Activated B cell treated with CpG ODN at 0.5 μM for 24 hours (primary cell): ENCODE measurements at regions of chr3 and their contacts with region 1.

Region 1: DNA sequence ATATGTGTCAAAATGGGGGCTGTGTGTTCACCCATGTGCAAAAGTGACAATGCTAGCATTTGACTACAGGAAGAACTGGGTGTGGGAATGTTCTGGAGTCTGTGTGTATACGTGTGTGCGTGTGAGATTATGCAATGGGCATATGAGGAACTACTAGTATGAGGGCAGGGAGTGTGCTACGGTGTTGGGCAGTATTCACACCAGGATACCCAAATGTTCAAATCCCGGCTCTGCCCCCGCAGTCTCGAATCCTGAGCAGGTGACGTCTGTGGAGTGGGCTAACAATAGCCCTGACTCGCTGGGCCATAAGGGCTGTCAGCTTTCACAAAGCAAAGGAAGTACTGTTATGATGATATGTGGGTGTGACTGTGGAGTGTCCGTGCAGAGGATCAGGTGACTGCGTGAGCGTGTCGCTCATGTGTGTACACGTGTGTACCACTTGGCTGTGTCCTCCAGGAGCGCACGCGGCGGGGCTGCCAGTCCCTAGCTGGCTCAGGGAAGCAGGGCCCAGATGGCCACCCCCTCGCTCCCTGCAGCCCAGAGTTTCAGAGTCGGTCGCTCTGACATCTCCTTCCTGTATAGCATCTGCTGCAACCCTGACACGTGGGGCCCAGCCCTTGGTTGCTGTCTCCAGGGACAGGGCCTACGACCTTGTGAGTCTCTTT is 27.2 kb downstream of the IQSEC1 start:
- DNase-seq: peak; percentile 61
- ATAC-seq: peak; percentile 90
- H3K4me3 Mint-ChIP-seq: peak overlapping the region; percentile 62
- H3K27ac Mint-ChIP-seq: peak overlapping the region; percentile 90
- H3K4me1 Mint-ChIP-seq: peaks cover 74% of the 10 kb centered on the region
- H3K27me3 Mint-ChIP-seq: no peaks in the 10 kb centered on the region
- CTCF ChIP-seq: no peak

Region 2: DNA sequence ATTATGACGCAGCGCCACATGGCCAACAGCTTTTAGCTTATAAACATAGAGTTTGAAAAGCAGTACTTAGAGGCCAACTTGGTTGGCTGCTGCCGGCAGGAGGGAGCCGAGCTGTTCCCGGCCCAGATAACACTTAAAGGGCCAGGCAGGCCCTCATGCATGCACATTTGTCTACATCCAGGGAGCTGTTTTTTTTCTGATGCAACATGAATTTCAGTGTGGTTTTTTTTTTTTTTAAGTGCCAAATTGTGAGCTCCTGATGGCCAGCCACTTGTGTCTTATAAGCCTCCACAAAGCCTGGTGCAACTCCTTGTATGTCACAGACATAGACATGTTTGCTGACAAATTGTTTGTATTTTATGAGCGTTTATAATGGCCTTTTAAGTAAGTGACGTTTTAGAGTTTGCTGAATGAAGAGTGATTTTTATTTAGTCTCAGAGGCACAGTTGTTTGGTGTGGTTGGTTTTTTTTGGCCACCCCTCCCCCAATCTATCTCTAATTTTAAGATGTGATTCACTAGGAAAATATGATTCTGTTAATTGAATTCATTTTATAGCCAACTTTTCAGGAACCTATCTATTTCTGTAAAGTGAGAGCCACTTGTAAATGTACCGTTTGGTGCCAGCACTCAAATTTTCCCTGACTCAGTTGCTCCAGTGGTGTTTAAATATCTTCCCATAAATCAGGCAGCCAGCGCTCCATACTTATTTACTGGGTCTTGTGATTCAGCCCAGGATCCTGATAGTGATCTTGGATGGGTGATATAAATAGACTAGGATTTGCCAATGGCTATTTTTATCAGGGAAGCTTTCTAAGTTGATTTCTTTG is 1536.6 kb before region 1 on chr3:
- CTCF ChIA-PET with region 1: no interaction called
- POLR2A ChIA-PET with region 1: no interaction called
- intact Hi-C with region 1: no loop called
- DNase-seq: no peak
- ATAC-seq: no peak
- H3K4me3 Mint-ChIP-seq: no peak overlapping the region
- H3K27ac Mint-ChIP-seq: no peak overlapping the region
- H3K4me1 Mint-ChIP-seq: no peaks in the 10 kb centered on the region
- H3K27me3 Mint-ChIP-seq: no peaks in the 10 kb centered on the region
- CTCF ChIP-seq: no peak

Region 3: DNA sequence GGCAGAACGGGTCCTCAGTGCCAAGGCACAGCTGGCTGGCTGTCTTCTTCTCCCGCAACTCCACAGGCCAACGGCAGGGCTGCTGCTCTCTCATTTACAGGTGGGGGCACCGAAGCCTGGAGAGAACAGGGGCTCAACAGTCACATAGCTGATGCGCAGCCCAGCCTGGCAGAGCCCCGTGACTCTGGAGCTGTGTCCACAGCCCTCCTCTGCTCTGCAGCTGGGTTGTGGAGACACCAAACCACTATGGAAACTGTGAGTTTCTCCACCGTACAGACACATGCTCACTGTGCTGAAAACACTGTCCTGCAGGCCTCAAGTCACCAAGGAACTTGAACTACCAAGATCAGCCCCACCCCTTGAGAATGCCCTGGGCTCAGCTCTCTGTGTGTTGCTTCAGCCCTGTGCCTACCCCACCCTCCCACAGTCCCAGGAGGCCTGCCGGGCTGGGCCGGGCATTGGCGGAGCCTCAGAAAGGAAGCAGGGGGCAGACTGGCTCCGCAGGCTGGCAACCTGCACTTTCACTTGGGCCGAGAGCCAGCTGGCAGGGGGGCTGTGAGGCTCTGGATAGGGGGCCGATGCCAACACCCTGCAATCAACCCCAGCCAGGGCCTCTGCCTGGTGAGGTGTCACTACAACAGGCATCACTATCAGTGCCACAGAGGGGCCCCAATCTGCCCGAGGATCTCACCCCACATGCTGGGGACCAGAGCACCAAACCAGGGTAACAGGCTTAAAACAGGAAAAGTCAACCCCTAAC is 91.0 kb before region 1 on chr3:
- CTCF ChIA-PET with region 1: interaction called, 9 read pairs
- POLR2A ChIA-PET with region 1: interaction called, 5 read pairs
- intact Hi-C with region 1: loop called (anchors 1 kb)
- DNase-seq: peak; percentile 67
- ATAC-seq: peak; percentile 95
- H3K4me3 Mint-ChIP-seq: peak overlapping the region; percentile 63
- H3K27ac Mint-ChIP-seq: peak overlapping the region; percentile 82
- H3K4me1 Mint-ChIP-seq: peaks cover 86% of the 10 kb centered on the region
- H3K27me3 Mint-ChIP-seq: no peaks in the 10 kb centered on the region
- CTCF ChIP-seq: no peak

Region 4: DNA sequence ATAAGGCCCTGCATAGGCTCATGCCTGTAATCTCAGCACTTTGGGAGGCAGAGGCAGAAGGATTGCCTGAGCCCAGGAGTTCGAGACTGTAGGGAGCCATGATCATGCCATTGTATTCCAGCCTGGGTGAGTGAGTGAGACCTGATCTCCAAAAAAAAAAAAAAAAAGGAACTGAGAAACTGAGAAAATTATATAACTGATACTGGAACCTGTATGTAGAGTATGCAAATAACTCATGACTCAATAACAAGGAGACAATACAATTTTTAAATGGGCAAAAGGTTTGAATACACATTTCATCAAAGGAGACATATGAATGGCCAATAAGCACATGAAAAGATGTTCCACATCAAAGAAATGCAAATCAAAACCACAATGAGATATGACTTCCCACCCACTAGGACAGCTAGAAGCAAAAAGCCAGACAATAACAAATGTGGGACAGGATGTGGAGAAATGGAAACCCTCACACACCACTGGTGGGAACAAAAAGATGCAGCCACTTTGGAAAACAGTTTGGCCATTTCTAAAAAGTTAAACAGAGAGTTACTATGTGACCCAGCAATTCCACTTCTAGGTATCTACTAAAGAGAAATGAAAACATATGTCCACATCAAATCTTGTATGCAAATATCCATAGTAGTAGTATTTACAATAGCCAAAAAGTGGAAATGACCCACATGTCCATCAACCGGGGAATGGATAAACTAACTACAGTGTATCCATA is 43.5 kb before region 1 on chr3:
- CTCF ChIA-PET with region 1: interaction called, 5 read pairs
- POLR2A ChIA-PET with region 1: interaction called, 17 read pairs
- intact Hi-C with region 1: loop called (anchors 1 kb)
- DNase-seq: no peak
- ATAC-seq: peak; percentile 64
- H3K4me3 Mint-ChIP-seq: peak overlapping the region; percentile 64
- H3K27ac Mint-ChIP-seq: peak overlapping the region; percentile 89
- H3K4me1 Mint-ChIP-seq: peaks cover 96% of the 10 kb centered on the region
- H3K27me3 Mint-ChIP-seq: no peaks in the 10 kb centered on the region
- CTCF ChIP-seq: no peak

Region 5: GRCh38 chr3:13064159-13064868 is 18.3 kb after region 1 on chr3:
- CTCF ChIA-PET with region 1: interaction called, 4 read pairs
- POLR2A ChIA-PET with region 1: interaction called, 14 read pairs
- intact Hi-C with region 1: no loop called
- DNase-seq: no peak
- ATAC-seq: no peak
- H3K4me3 Mint-ChIP-seq: no peak overlapping the region
- H3K27ac Mint-ChIP-seq: no peak overlapping the region
- H3K4me1 Mint-ChIP-seq: peaks cover 62% of the 10 kb centered on the region
- H3K27me3 Mint-ChIP-seq: no peaks in the 10 kb centered on the region
- CTCF ChIP-seq: no peak

Region 6: GRCh38 chr3:13083898-13084297 is 37.9 kb after region 1 on chr3:
- CTCF ChIA-PET with region 1: interaction called, 5 read pairs
- POLR2A ChIA-PET with region 1: interaction called, 18 read pairs
- intact Hi-C with region 1: loop called (anchors 1 kb)
- DNase-seq: peak; percentile 63
- ATAC-seq: peak; percentile 76
- H3K4me3 Mint-ChIP-seq: peak overlapping the region; percentile 72
- H3K27ac Mint-ChIP-seq: peak overlapping the region; percentile 92
- H3K4me1 Mint-ChIP-seq: peaks cover 92% of the 10 kb centered on the region
- H3K27me3 Mint-ChIP-seq: no peaks in the 10 kb centered on the region
- CTCF ChIP-seq: no peak